Activated CD4-positive, alpha-beta memory T cell treated with anti-CD3 and anti-CD28 coated beads for 36 hours (primary cell): ENCODE measurements at regions of chr19 and their contacts with region 1.

Region 1: GRCh38 chr19:54209811-54210494 is 9.3 kb downstream of the RPS9 start:
- DNase-seq: peak; percentile 37
- H3K4me3 Mint-ChIP-seq: peak overlapping the region; percentile 6
- H3K27ac Mint-ChIP-seq: peak overlapping the region; percentile 89
- H3K4me1 Mint-ChIP-seq: peaks cover 65% of the 10 kb centered on the region
- H3K27me3 Mint-ChIP-seq: no peaks in the 10 kb centered on the region

Region 2: GRCh38 chr19:53867225-53868090 is 342.5 kb before region 1 on chr19 and contains the start of gene MYADM:
- CTCF ChIA-PET with region 1: no interaction called
- POLR2A ChIA-PET with region 1: no interaction called
- intact Hi-C with region 1: loop called (anchors 5 kb)
- DNase-seq: peak; percentile 99
- H3K4me3 Mint-ChIP-seq: peak within 1 kb of the TSS; percentile 93
- H3K27ac Mint-ChIP-seq: peak within 1 kb of the TSS; percentile 89
- H3K4me1 Mint-ChIP-seq: peaks cover 28% of the 10 kb centered on the region
- H3K27me3 Mint-ChIP-seq: no peaks in the 10 kb centered on the region
- total RNA-seq, gene MYADM: 40.3 to 45.5 TPM

Region 3: GRCh38 chr19:54159352-54160181 is 50.4 kb before region 1 on chr19 and contains the start of gene LENG1:
- CTCF ChIA-PET with region 1: interaction called, 3 read pairs
- POLR2A ChIA-PET with region 1: interaction called, 5 read pairs
- intact Hi-C with region 1: loop called (anchors 2 kb)
- DNase-seq: peak; percentile 100
- H3K4me3 Mint-ChIP-seq: peak within 1 kb of the TSS; percentile 95
- H3K27ac Mint-ChIP-seq: peak within 1 kb of the TSS; percentile 98
- H3K4me1 Mint-ChIP-seq: peaks cover 51% of the 10 kb centered on the region
- H3K27me3 Mint-ChIP-seq: peaks cover 3% of the 10 kb centered on the region
- total RNA-seq, gene LENG1: 4.7 to 5.3 TPM

Region 4: GRCh38 chr19:54231077-54231931 is 21.4 kb after region 1 on chr19:
- CTCF ChIA-PET with region 1: interaction called, 3 read pairs
- POLR2A ChIA-PET with region 1: no interaction called
- intact Hi-C with region 1: loop called (anchors 2 kb)
- DNase-seq: peak; percentile 90
- H3K4me3 Mint-ChIP-seq: no peak overlapping the region
- H3K27ac Mint-ChIP-seq: no peak overlapping the region
- H3K4me1 Mint-ChIP-seq: peaks cover 8% of the 10 kb centered on the region
- H3K27me3 Mint-ChIP-seq: peaks cover 24% of the 10 kb centered on the region

Region 5: DNA sequence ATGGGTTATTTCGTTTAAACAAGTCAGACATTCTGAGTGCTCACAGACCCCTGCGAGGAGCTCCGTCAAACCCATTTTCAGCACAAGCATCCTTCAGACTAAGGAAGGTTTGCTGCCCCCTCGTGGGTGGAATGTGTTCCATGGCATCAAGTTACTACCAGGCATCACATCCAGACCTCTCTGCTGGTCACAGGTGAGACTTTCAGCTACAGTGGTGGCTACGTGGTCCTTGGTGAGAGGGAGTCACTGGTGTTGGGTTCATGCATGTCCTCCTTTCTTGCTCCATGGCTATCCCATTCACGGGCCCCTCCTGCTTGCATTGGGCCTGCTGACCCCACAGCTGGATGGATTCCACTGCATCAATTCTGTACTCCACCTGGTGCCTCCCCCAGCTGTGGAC is 56.2 kb after region 1 on chr19:
- CTCF ChIA-PET with region 1: interaction called, 11 read pairs
- POLR2A ChIA-PET with region 1: no interaction called
- intact Hi-C with region 1: no loop called
- DNase-seq: peak; percentile 84
- H3K4me3 Mint-ChIP-seq: no peak overlapping the region
- H3K27ac Mint-ChIP-seq: no peak overlapping the region
- H3K4me1 Mint-ChIP-seq: no peaks in the 10 kb centered on the region
- H3K27me3 Mint-ChIP-seq: peaks cover 29% of the 10 kb centered on the region

Region 6: DNA sequence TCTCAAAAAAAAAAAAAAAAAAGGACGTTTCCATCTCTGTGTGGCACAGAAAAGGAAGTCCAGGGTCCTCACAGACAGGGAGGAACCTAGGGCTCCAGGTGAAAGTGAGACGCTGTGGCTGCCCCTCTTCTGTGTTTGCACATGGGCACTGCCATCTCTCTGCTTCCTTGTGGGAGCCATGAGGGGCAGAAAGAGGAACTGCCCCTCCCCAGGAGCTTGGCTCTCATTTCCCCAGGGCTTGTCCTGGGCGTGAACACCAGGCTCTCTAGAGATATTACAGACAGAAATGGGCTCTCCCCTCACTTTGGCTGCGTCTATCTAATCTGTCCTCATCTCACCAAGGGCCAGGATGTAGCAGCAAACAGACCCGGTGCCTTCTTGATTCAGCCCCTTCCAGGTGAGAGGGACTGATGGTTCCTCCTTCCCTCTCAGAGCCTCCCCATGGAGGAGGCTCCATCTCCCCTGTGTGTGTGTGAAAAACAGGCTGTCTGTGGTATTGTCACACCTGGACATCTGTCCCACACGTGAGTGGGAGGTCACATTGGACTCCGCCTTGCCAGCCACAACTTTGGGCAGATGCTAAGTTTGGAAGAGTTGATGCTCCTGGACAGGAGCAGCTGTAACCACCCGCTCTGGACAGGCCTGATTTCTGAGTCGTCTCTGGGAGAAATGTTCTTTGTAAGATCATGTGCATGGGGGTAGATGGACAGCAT is 129.8 kb after region 1 on chr19:
- CTCF ChIA-PET with region 1: no interaction called
- POLR2A ChIA-PET with region 1: no interaction called
- intact Hi-C with region 1: no loop called
- DNase-seq: no peak
- H3K4me3 Mint-ChIP-seq: no peak overlapping the region
- H3K27ac Mint-ChIP-seq: no peak overlapping the region
- H3K4me1 Mint-ChIP-seq: no peaks in the 10 kb centered on the region
- H3K27me3 Mint-ChIP-seq: peaks cover 10% of the 10 kb centered on the region